PC-9 (cell line): ENCODE measurements at regions of chr1 and their contacts with region 1.

Region 1: DNA sequence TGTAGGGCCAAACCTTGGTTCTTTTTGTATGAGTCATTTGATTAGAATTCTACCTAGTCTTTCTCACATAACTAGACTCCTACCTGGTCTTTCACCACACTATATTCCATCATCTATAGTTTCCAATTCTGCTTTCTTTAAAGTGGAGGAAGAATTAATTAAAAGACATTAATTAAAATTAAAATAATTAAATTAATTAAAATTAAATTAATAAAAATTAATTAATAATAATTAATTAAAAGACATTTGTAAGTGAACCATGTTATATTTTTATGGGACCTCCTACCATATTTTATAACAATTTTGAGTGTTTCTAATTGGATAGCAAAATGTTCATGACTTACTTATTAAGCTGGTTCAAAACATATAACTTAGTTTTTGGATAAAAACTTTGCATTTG is 77.4 kb downstream of the CCDC18 start:
- DNase-seq: peak in 1 of 2 experiments; percentile 56
- H3K4me3 ChIP-seq: no peak overlapping the region
- H3K27ac ChIP-seq: 0 out of 2 replicates have a peak overlapping the region, but pooled peaks have one; percentile 8
- H3K4me1 ChIP-seq: peaks cover 10% of the 10 kb centered on the region; the same call in 1 of the 2 replicates
- H3K27me3 ChIP-seq: no peaks in the 10 kb centered on the region
- CTCF ChIP-seq: no peak

Region 2: GRCh38 chr1:92663775-92664174 is 594.1 kb before region 1 on chr1:
- CTCF ChIA-PET with region 1: no interaction called
- POLR2A ChIA-PET with region 1: no interaction called
- intact Hi-C with region 1: no loop called
- DNase-seq: no peak
- H3K4me3 ChIP-seq: no peak overlapping the region
- H3K27ac ChIP-seq: no peak overlapping the region
- H3K4me1 ChIP-seq: no peaks in the 10 kb centered on the region
- H3K27me3 ChIP-seq: no peaks in the 10 kb centered on the region
- CTCF ChIP-seq: no peak

Region 3: DNA sequence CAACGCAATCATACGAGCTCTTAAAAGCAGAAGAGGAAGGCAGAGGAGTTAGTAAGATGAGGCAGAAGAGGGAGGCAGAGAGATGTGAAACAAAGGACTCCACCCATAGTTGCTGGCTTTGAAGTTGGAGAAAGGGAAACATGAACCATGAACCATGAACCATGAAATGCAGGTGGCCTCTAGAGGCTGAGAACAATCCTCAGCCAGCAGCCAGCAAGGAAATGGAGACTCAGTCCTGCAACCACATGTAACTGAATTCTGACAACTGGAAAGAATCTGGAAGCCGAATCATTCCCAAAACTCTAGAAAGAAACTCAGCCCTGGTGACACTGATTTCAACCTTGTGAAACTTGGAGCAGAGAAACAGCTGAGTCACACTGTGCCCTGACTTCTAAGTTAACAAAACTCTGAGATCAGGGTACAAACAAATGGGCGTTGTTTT is 306.7 kb before region 1 on chr1:
- CTCF ChIA-PET with region 1: no interaction called
- POLR2A ChIA-PET with region 1: no interaction called
- intact Hi-C with region 1: no loop called
- DNase-seq: peak; percentile 22 to 79
- H3K4me3 ChIP-seq: peak overlapping the region; percentile 22; the same call in 1 of the 2 replicates
- H3K27ac ChIP-seq: peak overlapping the region; percentile 86
- H3K4me1 ChIP-seq: peaks cover 26% of the 10 kb centered on the region
- H3K27me3 ChIP-seq: no peaks in the 10 kb centered on the region
- CTCF ChIP-seq: no peak

Region 4: DNA sequence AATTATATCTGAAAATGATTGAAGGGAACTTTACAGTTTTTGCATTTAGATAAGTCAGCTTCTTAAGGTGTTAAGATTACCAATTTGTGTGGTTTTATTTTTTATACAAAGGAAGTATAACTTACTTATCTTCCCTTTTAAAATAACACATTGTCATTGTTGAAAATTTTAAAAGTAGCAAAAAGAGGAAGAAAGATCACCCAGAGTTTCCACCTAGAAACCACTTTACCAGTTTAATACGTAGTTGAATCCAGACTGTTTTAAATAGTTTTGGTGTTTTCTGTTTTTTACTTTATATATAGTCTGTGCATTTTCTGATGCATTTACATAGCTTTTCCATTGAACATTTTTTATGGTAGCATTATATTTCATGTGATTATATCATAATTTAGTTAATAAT is 71.2 kb before region 1 on chr1:
- CTCF ChIA-PET with region 1: no interaction called
- POLR2A ChIA-PET with region 1: no interaction called
- intact Hi-C with region 1: no loop called
- DNase-seq: no peak
- H3K4me3 ChIP-seq: no peak overlapping the region
- H3K27ac ChIP-seq: no peak overlapping the region; the same call in 1 of the 2 replicates
- H3K4me1 ChIP-seq: peaks cover 17% of the 10 kb centered on the region
- H3K27me3 ChIP-seq: no peaks in the 10 kb centered on the region
- CTCF ChIP-seq: no peak

Region 5: GRCh38 chr1:93235271-93235670 is 22.6 kb before region 1 on chr1:
- CTCF ChIA-PET with region 1: no interaction called
- POLR2A ChIA-PET with region 1: no interaction called
- intact Hi-C with region 1: loop called (anchors 2 kb)
- DNase-seq: no peak
- H3K4me3 ChIP-seq: no peak overlapping the region
- H3K27ac ChIP-seq: no peak overlapping the region
- H3K4me1 ChIP-seq: no peaks in the 10 kb centered on the region
- H3K27me3 ChIP-seq: no peaks in the 10 kb centered on the region
- CTCF ChIP-seq: no peak